Activated naive CD4-positive, alpha-beta T cell treated with anti-CD3 and anti-CD28 coated beads for 36 hours (primary cell): ENCODE measurements at regions of chr12 and their contacts with region 1.

Region 1: GRCh38 chr12:111024205-111024801 is 103.9 kb upstream of the MYL2 start:
- DNase-seq: peak; percentile 68
- H3K4me3 Mint-ChIP-seq: no peak overlapping the region
- H3K27ac Mint-ChIP-seq: no peak overlapping the region
- H3K4me1 Mint-ChIP-seq: no peaks in the 10 kb centered on the region
- H3K27me3 Mint-ChIP-seq: peaks cover 3% of the 10 kb centered on the region

Region 2: DNA sequence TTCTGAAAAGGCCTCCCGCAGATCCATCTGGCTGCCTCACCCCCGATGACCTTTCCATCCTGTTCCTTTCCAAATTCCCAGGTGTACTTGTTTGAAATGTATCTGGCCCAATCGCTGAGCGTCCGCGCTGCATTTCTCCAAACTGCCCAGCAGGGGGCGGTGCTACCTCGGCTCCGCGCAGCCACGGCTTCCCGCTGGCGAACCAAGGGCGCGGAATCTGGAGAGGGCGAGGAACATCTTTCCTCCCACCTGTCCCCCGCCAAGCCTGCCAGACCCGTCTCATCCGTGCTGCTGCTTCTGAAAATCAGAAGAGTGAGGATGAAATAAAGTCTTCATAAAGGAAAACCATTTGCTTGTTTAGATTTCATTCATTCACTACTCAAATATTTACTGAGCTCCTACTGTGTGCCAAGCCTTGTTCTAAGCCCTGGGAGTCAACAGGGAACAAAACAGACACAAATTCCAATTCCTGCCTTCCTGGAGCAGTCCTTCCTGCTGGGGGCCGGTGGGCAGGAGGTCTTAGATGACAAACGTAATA is 87.1 kb before region 1 on chr12:
- CTCF ChIA-PET with region 1: interaction called, 3 read pairs
- intact Hi-C with region 1: loop called (anchors 10 kb)
- DNase-seq: peak; percentile 68
- H3K4me3 Mint-ChIP-seq: no peak overlapping the region
- H3K27ac Mint-ChIP-seq: no peak overlapping the region
- H3K4me1 Mint-ChIP-seq: peaks cover 7% of the 10 kb centered on the region
- H3K27me3 Mint-ChIP-seq: peaks cover 13% of the 10 kb centered on the region

Region 3: GRCh38 chr12:111174251-111174960 is 150.1 kb after region 1 on chr12:
- CTCF ChIA-PET with region 1: interaction called, 3 read pairs
- intact Hi-C with region 1: loop called (anchors 1 kb)
- DNase-seq: peak; percentile 19
- H3K4me3 Mint-ChIP-seq: no peak overlapping the region
- H3K27ac Mint-ChIP-seq: no peak overlapping the region
- H3K4me1 Mint-ChIP-seq: peaks cover 5% of the 10 kb centered on the region
- H3K27me3 Mint-ChIP-seq: peaks cover 11% of the 10 kb centered on the region

Region 4: GRCh38 chr12:111268738-111269572 is 244.7 kb after region 1 on chr12:
- CTCF ChIA-PET with region 1: interaction called, 14 read pairs
- intact Hi-C with region 1: loop called (anchors 1 kb)
- DNase-seq: peak; percentile 35
- H3K4me3 Mint-ChIP-seq: no peak overlapping the region
- H3K27ac Mint-ChIP-seq: no peak overlapping the region
- H3K4me1 Mint-ChIP-seq: peaks cover 1% of the 10 kb centered on the region
- H3K27me3 Mint-ChIP-seq: no peaks in the 10 kb centered on the region

Region 5: DNA sequence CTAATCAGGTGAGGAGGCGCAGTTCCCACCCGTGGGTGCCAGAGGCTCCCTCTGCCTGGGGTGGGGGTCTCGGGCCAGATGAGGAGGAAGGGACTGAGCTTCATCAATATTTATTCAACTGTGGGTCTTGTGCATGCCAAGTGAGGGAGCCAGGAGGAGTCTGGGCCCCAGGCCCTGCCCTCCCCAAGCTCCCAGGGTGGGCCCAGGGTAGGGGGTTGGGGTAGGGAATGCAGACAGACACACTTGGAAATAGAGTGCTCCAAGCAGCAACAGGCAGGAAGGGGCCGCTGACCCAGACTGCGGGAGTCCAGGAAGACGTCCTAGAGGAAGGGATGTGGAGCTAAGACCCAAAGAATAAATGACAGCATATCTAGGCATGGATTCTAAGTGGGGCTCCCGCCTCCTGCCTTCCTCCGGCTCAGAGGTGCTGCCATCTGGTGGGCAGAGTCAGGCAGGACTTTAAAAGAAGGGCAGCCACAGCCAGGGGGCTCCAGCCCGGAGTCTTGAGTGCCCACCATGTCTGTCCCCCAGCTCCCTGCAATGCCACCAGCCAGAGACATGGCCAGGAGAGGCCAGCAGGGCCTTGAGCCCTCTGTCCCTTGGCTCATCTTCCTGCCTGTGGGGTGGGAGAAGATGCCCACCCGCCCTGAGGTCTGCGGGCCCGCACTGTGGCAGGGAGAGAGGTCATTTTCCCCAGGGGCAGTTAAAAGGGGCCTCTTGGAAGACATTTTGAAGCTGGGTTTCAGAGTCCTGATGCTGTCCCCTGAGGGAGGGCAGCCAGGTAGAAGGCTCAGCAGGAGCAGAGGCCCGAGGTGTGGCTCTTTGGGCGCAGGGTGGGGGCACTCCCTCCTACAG is 274.5 kb after region 1 on chr12:
- CTCF ChIA-PET with region 1: interaction called, 5 read pairs
- intact Hi-C with region 1: loop called (anchors 1 kb)
- DNase-seq: peak; percentile 62
- H3K4me3 Mint-ChIP-seq: no peak overlapping the region
- H3K27ac Mint-ChIP-seq: no peak overlapping the region
- H3K4me1 Mint-ChIP-seq: no peaks in the 10 kb centered on the region
- H3K27me3 Mint-ChIP-seq: no peaks in the 10 kb centered on the region

Region 6: GRCh38 chr12:111313833-111314259 is 289.5 kb after region 1 on chr12:
- CTCF ChIA-PET with region 1: interaction called, 4 read pairs
- intact Hi-C with region 1: loop called (anchors 1 kb)
- DNase-seq: peak; percentile 77
- H3K4me3 Mint-ChIP-seq: no peak overlapping the region
- H3K27ac Mint-ChIP-seq: no peak overlapping the region
- H3K4me1 Mint-ChIP-seq: peaks cover 11% of the 10 kb centered on the region
- H3K27me3 Mint-ChIP-seq: peaks cover 10% of the 10 kb centered on the region